Aorta (tissue), 5 donors: ENCODE measurements at regions of chr7 and their contacts with region 1.

Region 1: GRCh38 chr7:148932-149855 is 43.2 kb upstream of the FAM20C start:
- DNase-seq: peak; percentile 99
- ATAC-seq: peak; percentile 100
- H3K4me3 ChIP-seq: peak overlapping the region in 1 of 2 donors; percentile 12
- H3K27ac ChIP-seq: peak overlapping the region in 1 of 2 donors; percentile 29
- H3K4me1 ChIP-seq: no peaks in the 10 kb centered on the region
- H3K27me3 ChIP-seq: no peaks in the 10 kb centered on the region

Region 2: DNA sequence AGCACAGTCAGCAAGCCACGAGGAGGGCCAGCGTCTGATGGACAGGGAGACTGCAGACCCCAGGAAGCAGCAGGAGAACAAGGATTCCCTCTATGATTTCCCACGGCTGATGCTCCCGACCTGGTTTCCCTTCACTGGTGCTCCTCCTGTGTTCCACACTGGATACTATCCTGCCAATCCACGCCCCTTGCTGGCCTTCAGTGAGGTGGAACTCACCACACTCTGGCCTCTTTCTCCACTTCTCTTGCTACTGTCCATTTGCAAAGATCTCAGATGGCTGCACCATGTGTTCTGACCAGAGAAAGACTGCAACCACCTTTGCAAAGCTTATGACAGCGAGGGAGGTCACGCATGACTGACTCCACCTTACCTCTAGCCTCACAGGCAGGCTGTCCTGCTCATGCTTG is 107.8 kb before region 1 on chr7:
- intact Hi-C with region 1: no loop called
- DNase-seq: no peak
- ATAC-seq: no peak
- H3K4me3 ChIP-seq: no peak overlapping the region
- H3K27ac ChIP-seq: no peak overlapping the region
- H3K4me1 ChIP-seq: no peaks in the 10 kb centered on the region
- H3K27me3 ChIP-seq: no peaks in the 10 kb centered on the region

Region 3: DNA sequence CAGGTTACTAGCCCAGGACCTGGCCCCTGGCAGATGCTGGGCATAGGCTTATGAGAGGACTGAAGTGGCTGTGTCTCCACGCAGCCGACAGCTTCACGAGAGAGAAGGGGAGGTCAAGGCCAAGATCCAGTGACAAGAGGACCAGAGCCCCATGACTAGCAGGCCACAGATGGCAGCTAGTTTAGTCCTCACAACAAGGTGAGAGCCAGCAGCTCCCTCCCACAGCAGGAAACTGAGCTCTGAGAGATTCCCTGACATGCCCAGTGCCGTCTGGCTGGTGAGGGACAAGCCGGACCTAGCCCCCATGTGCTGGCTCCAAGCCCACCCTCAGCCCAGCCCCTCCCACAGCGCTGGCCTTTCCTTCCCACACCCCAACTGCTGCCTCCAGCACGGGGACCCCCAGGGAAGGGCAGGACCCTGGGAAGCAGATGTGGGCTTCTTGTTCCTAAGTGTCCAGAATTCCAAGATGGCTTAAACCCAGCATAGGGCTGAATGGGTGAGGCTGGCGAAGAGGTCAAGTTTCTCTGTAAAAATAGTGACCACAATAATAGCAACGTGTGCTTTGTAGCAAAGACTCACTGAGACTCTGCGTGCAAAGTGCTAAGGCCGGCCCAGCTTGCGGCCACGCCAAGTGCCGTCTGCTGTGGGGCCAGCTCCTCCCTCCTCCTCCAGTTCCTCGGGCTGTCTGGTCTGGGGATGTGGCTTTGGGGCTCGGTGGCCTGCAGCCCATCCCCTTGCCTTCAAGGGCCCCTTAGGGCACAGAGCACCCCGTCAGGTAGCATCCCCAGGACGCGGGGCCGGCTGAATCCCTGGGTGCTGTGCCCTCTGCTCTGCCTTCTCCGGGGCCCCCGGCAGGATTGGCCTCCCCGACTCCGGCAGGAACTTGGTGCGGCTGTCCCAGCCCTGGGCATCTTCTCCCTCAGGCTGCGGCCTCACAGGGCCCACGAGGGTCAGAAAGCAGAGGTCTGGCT is 35.4 kb after region 1 on chr7:
- intact Hi-C with region 1: loop called in 1 of 2 experiments (anchors 5 kb)
- DNase-seq: no peak
- ATAC-seq: peak; percentile 2
- H3K4me3 ChIP-seq: no peak overlapping the region
- H3K27ac ChIP-seq: no peak overlapping the region
- H3K4me1 ChIP-seq: no peaks in the 10 kb centered on the region
- H3K27me3 ChIP-seq: no peaks in the 10 kb centered on the region

Region 4: GRCh38 chr7:191981-192649 is 42.9 kb after region 1 on chr7 and contains the start of gene FAM20C:
- intact Hi-C with region 1: loop called (anchors 2 to 5 kb)
- DNase-seq: peak; percentile 94 to 96
- ATAC-seq: peak; percentile 89
- H3K4me3 ChIP-seq: peak within 1 kb of the TSS; percentile 75 to 86
- H3K27ac ChIP-seq: peak within 1 kb of the TSS in 1 of 2 donors; percentile 38
- H3K4me1 ChIP-seq: no peaks in the 10 kb centered on the region
- H3K27me3 ChIP-seq: no peaks in the 10 kb centered on the region
- total RNA-seq, gene FAM20C: 88.3 to 104 TPM

Region 5: DNA sequence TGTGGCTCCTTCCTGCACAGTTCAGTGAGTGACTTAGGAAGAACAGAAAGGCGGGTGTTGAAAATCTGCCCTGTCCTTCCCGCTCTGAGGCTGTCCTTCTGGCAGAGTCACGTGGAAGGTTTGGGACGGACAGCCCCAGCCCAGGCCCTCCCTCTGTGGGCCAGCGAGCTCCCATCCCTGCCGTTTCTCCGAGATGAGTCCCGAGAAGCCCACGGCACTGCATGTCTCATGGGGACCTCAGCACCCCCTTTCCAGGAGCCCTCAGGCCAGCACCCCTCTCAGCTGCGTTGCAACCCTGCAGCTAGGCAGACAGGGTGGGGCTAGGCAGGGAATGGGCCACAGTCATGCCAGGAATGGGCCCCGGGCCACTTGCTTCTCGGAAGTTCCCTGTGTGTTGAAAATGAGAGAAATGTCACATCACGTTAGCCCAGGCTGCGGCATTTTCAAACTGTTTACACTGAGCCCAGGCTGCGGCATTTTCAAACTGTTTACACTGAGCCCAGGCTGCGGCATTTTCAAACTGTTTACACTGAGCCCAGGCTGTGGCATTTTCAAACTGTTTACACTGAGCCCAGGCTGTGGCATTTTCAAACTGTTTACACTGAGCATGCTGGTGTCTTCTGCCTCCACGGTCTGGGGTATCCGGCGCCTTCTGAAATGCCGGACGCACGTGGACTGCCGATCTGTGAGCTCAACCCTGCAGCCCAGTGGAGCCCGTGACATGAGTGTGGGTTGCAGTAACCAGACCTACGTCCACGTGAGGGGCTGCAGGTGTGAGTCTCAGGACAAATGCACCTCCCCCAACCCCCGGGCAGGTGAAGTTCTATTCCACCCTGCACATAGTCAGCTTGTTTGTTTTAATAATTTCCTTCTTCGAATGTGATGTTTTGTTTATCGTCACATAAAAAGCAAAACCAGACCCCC is 85.7 kb after region 1 on chr7:
- intact Hi-C with region 1: loop called in 1 of 2 experiments (anchors 5 kb)
- DNase-seq: peak; percentile 86 to 90
- ATAC-seq: peak; percentile 72
- H3K4me3 ChIP-seq: no peak overlapping the region
- H3K27ac ChIP-seq: peak overlapping the region; percentile 6 to 41
- H3K4me1 ChIP-seq: no peaks in the 10 kb centered on the region
- H3K27me3 ChIP-seq: no peaks in the 10 kb centered on the region